Left cardiac atrium (tissue), 4 donors: ENCODE measurements at regions of chrX and their contacts with region 1.

Region 1: GRCh38 chrX:50579955-50580354 is 109.3 kb upstream of the DGKK start:
- DNase-seq: no peak
- ATAC-seq: peak; percentile 61 to 63

Region 2: DNA sequence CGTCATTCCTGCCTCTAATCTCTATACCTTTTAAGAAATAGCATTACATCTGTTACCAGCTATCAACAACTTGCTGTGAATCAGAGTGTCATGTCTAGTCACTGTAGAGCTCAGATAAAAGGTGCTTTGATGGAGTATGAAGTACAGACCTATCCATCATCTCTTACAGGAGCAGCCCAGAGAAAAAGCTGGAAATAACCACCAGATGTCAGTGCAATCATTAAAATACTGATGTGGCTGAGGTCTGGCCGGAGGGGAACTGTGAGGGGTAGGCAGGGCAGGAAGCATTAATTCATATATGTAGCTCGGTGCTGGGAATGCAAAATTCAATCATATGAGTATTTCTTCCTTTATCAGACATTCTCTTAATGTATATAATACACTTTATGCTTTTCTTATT is 479.8 kb before region 1 on chrX:
- intact Hi-C with region 1: loop called in 1 of 2 experiments (anchors 5 kb)
- DNase-seq: no peak
- ATAC-seq: no peak

Region 3: GRCh38 chrX:50697691-50698090 is 117.7 kb after region 1 on chrX:
- intact Hi-C with region 1: no loop called
- DNase-seq: no peak
- ATAC-seq: peak; percentile 57 to 72